Activated CD8-positive, alpha-beta T cell treated with anti-CD3 and anti-CD28 coated beads for 36 hours (primary cell): ENCODE measurements at regions of chr4 and their contacts with region 1.

Region 1: DNA sequence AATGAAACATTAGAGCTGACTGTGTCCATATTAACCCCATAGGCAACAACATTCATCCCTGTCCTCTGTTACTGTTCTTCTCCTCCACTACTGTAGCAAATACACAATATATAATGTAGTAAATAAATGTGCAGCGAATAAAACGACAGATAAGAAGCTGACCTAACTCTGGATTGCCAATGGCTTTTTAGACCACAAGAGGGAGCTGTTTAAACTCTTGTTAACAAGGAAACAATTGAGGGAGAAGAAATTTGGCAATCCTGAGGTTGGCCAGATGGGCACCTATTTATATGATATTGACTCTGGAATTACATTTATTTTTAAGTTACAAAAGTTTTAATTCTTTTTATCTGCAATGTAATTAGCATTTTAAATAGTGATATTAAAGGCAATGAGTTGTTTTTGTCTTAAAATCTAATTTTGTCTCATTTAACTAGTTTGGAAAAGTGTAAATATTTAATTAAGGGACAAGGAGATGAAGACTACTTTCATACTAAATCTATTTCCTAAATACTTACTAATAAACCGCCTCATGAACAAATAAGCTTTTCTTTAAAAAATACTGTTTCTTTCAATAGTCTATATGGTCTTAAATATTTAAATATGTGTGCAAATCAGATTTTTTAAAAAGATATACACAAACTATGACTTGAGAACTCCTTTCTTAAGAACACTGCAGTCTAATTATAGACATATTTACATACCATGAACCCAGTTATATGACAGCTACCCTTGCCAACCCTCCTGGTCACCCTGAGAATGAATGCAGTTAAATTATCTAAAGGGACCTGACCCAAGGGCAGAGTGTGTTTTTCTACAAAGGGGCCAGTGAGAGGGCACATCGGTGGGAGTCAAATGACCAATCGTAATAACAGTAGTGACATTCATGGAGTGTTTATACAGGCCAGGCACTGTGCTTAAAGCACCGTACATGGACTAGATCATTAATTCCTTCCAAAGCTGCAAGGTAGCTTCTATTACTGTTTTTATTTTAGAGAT is 52.9 kb upstream of the HPF1 start:
- DNase-seq: peak; percentile 24
- ATAC-seq: no peak
- H3K4me3 Mint-ChIP-seq: no peak overlapping the region
- H3K27ac Mint-ChIP-seq: no peak overlapping the region
- H3K4me1 Mint-ChIP-seq: no peaks in the 10 kb centered on the region
- H3K27me3 Mint-ChIP-seq: no peaks in the 10 kb centered on the region
- CTCF ChIP-seq: peak; percentile 91

Region 2: GRCh38 chr4:169485791-169486742 is 324.6 kb before region 1 on chr4:
- CTCF ChIA-PET with region 1: no interaction called
- POLR2A ChIA-PET with region 1: no interaction called
- intact Hi-C with region 1: no loop called
- DNase-seq: peak; percentile 42
- ATAC-seq: peak; percentile 51
- H3K4me3 Mint-ChIP-seq: no peak overlapping the region
- H3K27ac Mint-ChIP-seq: no peak overlapping the region
- H3K4me1 Mint-ChIP-seq: no peaks in the 10 kb centered on the region
- H3K27me3 Mint-ChIP-seq: no peaks in the 10 kb centered on the region
- CTCF ChIP-seq: peak; percentile 77

Region 3: GRCh38 chr4:169800541-169800940 is 10.1 kb before region 1 on chr4:
- CTCF ChIA-PET with region 1: interaction called, 10 read pairs
- POLR2A ChIA-PET with region 1: no interaction called
- intact Hi-C with region 1: no loop called
- DNase-seq: no peak
- ATAC-seq: no peak
- H3K4me3 Mint-ChIP-seq: no peak overlapping the region
- H3K27ac Mint-ChIP-seq: no peak overlapping the region
- H3K4me1 Mint-ChIP-seq: no peaks in the 10 kb centered on the region
- H3K27me3 Mint-ChIP-seq: peaks cover 9% of the 10 kb centered on the region
- CTCF ChIP-seq: no peak

Region 4: DNA sequence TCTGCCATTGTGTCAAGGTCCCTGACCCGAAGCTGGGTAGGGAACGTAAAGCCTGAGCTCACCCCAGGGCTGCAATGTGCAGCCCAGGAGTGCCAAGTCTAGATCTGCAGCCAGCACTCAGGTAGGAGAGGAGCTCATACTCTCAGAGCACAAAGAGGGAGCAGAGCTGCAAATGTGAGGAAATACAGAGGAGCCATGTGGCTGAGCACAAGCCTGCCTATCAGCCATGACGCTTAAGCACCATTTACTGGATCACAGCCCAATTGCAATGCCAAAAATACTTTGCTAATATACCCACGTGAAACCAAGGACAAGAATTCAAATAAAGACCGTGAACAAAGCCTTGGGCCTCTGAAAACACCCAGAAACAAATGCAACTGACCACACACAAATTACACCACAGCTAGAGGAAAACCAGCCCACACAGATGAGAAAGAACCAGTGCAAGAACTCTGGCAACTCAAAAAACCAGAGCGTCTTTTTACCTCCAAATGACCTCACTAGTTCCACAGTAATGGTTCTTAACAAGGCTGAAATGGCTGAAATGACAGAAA is 16.1 kb after region 1 on chr4:
- CTCF ChIA-PET with region 1: interaction called, 11 read pairs
- POLR2A ChIA-PET with region 1: no interaction called
- intact Hi-C with region 1: no loop called
- DNase-seq: no peak
- ATAC-seq: no peak
- H3K4me3 Mint-ChIP-seq: no peak overlapping the region
- H3K27ac Mint-ChIP-seq: no peak overlapping the region
- H3K4me1 Mint-ChIP-seq: peaks cover 9% of the 10 kb centered on the region
- H3K27me3 Mint-ChIP-seq: peaks cover 5% of the 10 kb centered on the region
- CTCF ChIP-seq: no peak

Region 5: DNA sequence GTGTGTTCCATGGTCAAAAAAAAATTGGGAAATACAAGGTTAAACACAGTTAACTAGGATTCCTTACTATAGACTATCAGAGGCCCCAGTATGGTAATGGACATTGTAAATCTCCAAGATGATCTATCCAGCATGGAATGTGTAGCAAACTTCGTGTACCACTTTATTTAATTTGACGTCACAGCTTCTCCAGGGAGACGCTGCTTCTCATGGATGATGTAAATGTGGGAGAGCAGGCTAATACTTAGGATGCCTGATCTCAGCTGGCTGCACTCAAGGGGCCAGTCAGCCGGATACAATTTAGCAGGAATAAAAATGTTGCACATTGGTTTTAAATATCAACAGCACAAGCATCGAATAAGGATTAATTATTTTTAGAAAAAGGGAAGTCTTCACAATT is 58.9 kb after region 1 on chr4:
- CTCF ChIA-PET with region 1: no interaction called
- POLR2A ChIA-PET with region 1: no interaction called
- intact Hi-C with region 1: no loop called
- DNase-seq: no peak
- ATAC-seq: no peak
- H3K4me3 Mint-ChIP-seq: no peak overlapping the region
- H3K27ac Mint-ChIP-seq: no peak overlapping the region
- H3K4me1 Mint-ChIP-seq: no peaks in the 10 kb centered on the region
- H3K27me3 Mint-ChIP-seq: peaks cover 4% of the 10 kb centered on the region
- CTCF ChIP-seq: no peak

Region 6: GRCh38 chr4:169952236-169953002 is 141.8 kb after region 1 on chr4:
- CTCF ChIA-PET with region 1: no interaction called
- POLR2A ChIA-PET with region 1: no interaction called
- intact Hi-C with region 1: no loop called
- DNase-seq: no peak
- ATAC-seq: no peak
- H3K4me3 Mint-ChIP-seq: no peak overlapping the region
- H3K27ac Mint-ChIP-seq: no peak overlapping the region
- H3K4me1 Mint-ChIP-seq: peaks cover 4% of the 10 kb centered on the region
- H3K27me3 Mint-ChIP-seq: no peaks in the 10 kb centered on the region
- CTCF ChIP-seq: no peak

Region 7: DNA sequence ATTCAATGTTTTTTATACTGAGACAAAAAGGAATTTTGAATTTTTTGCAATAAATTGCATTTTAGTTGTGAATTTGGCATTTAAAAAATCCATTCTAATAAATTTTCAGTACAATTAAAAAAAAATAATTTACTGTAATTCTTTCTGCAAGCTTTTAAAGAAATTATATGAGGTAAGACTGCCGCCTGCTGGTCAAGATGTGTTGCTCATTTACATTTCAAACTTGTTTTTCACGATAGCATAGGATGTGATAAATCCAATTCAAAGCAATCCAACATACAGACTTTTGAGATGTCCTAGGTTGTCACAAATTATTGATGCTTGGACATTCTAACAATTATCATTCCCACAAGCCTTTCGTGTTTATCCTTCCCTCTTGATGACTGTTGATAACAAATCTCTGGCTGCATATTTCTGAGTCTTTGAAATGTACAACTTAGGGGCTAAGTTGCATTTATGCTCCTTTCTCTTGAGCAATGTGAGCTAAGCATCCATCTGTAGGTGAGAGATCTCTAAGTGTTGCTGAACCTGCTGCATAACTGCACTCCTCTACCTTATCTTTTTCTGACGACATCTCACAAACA is 237.2 kb after region 1 on chr4:
- CTCF ChIA-PET with region 1: interaction called, 27 read pairs
- POLR2A ChIA-PET with region 1: no interaction called
- intact Hi-C with region 1: loop called (anchors 2 kb)
- DNase-seq: peak; percentile 77
- ATAC-seq: no peak
- H3K4me3 Mint-ChIP-seq: no peak overlapping the region
- H3K27ac Mint-ChIP-seq: no peak overlapping the region
- H3K4me1 Mint-ChIP-seq: no peaks in the 10 kb centered on the region
- H3K27me3 Mint-ChIP-seq: peaks cover 2% of the 10 kb centered on the region
- CTCF ChIP-seq: no peak